ENCODE measurements at regions of chr15 and their contacts with region 1.

Region 1: DNA sequence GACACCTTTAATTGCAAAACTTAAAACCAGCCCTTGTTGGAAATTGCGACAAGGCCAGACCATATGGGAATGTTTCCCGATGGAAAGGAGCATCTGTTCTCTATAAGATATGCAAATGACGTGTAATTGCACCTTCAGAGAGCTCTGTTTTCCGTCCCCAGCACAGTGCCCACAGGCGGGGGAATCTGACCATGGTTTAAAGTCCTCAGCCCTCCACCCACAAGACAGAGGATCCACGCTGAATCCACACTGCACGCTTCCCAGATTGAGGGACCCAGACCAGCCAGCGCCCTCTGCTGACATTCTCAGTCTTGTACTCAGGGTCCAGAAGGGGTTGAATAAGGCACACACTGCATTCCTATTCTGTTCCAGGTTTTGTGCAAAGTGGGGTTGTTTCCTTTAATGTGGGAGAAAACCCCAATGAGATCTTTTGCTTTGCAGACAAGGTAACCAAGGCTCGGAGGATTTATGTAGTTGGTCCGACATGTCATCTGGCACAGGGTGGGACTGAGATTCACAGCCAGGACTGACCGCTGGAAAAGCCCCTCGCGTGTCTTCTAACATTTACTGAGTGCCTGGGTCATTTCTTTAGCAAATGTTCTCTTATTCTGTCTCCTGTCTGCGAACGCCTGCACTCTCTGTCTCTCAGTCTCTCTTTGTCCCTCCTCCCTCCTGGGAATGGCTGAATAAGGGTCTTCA is 36.8 kb upstream of the KLHL25 start:
- DNase-seq: no peak
- CTCF ChIP-seq: peak; percentile 65

Region 2: GRCh38 chr15:85730001-85730820 is 101.4 kb before region 1 on chr15:
- in situ Hi-C with region 1: loop called (anchors 10 kb)
- DNase-seq: peak; percentile 63
- CTCF ChIP-seq: peak; percentile 70

Region 3: DNA sequence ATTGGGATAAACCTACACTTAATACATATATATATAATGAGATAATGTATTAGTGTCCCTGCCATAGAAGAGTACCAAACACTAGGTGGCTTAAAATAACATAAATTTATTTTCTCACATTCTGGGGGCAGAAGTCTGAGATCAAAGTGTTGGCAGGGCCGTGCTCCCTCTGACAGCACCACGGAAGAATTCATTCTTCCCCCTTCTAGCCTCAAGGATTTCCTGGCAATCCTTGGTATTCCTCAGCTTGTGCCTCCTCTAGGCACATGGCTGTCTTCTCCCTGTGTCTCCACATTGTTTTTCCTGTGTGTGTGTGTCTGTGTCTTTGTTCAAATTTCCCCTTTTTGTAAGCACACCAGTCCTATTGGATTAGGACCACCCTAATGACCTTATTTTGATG is 132.9 kb after region 1 on chr15:
- in situ Hi-C with region 1: no loop called
- DNase-seq: no peak
- CTCF ChIP-seq: no peak

Measured in GM13977 (cell line).